Psoas muscle (tissue), 8 donors: ENCODE measurements at regions of chr11 and their contacts with region 1.

Region 1: GRCh38 chr11:30586251-30587144 is at the start of gene MPPED2:
- DNase-seq: peak; percentile 47 to 78
- ATAC-seq: peak; percentile 82 to 86 (median 85)
- H3K4me3 ChIP-seq: peak within 1 kb of the TSS; percentile 93
- H3K27ac ChIP-seq: peak within 1 kb of the TSS; percentile 82
- H3K4me1 ChIP-seq: no peaks in the 10 kb centered on the region
- H3K27me3 ChIP-seq: peaks cover 0 to 7% (median 0%) of the 10 kb centered on the region in 3 donors
- CTCF ChIP-seq: peak; percentile 52
- total RNA-seq, gene MPPED2: 3.4 to 7.9 (median 4.8) TPM

Region 2: GRCh38 chr11:30424844-30425243 is 161.7 kb before region 1 on chr11:
- intact Hi-C with region 1: loop called in 1 of 2 experiments (anchors 5 kb)
- DNase-seq: no peak
- ATAC-seq: peak; percentile 26 to 61 (median 46)
- H3K4me3 ChIP-seq: no peak overlapping the region
- H3K27ac ChIP-seq: peak overlapping the region; percentile 19
- H3K4me1 ChIP-seq: peaks cover 22% of the 10 kb centered on the region
- H3K27me3 ChIP-seq: no peaks in the 10 kb centered on the region
- CTCF ChIP-seq: no peak

Region 3: DNA sequence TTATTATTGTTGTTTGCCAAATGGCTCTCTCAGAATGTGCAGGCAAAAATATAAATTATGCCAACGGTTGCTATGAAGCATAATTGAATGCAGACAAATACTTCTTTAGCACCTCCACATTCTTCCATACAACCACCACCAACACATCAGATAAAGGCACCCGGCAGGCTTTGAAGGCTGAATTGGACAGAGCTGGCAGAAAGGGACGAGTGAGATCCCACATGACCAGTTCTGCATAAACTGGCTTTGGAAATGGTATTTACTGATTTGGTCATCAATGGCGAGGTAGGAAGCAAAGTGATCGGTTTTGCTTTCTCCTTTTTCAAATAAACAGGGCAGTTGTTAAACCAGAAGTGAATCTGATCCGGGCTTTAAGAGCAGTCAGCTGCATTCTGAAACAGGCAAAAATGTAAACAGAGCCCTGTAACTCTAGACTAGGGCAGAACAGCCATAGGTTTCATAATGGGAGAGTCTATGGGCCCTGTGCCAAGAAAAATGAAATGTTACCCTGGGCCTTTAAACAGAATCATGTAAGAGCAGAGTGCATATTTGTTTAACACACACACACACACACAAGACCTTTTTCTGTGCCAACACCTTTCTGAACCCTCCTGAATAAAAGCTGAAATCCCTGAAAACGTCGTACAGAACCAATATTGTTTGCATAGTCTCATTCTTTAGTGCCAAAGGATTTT is 98.0 kb before region 1 on chr11:
- intact Hi-C with region 1: loop called (anchors 5 to 10 kb)
- DNase-seq: no peak
- ATAC-seq: peak; percentile 47 to 86 (median 65)
- H3K4me3 ChIP-seq: peak overlapping the region; percentile 47
- H3K27ac ChIP-seq: peak overlapping the region; percentile 58
- H3K4me1 ChIP-seq: peaks cover 30% of the 10 kb centered on the region
- H3K27me3 ChIP-seq: no peaks in the 10 kb centered on the region
- CTCF ChIP-seq: no peak

Region 4: DNA sequence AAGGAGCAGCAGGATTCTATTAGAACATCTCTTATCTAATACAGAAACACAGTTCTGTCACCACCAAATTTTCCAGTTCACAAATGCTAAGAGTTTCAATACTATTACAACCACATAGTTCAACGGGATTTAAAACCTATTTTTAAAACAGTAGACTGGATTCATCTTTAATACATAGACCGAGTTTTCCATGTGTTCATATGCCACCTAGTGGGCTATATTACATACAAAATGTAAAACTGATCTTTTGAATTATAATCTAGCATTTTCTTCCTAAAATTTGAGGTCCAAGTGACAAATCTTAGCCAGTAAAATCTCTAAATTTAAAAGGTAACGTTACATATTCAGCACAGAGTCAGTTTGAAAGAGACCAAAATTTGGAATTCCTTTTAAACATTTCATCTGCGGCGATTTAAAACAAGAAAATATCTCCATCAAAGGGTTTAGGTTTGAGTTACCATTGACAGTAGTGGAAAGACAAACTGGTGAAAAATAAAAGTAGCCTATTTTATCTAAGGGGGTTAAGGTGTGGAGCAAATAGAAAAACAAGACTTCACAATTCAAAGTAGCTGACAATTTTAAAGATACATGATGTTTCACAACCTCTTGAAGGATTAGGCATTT is 269.0 kb after region 1 on chr11:
- intact Hi-C with region 1: loop called in 1 of 2 experiments (anchors 10 kb)
- DNase-seq: no peak
- ATAC-seq: peak in 2 of 4 donors; percentile 51 to 69
- H3K4me3 ChIP-seq: no peak overlapping the region
- H3K27ac ChIP-seq: no peak overlapping the region
- H3K4me1 ChIP-seq: no peaks in the 10 kb centered on the region
- H3K27me3 ChIP-seq: no peaks in the 10 kb centered on the region
- CTCF ChIP-seq: peak; percentile 67